A673 (cell line): ENCODE measurements at regions of chr4 and their contacts with region 1.

Region 1: DNA sequence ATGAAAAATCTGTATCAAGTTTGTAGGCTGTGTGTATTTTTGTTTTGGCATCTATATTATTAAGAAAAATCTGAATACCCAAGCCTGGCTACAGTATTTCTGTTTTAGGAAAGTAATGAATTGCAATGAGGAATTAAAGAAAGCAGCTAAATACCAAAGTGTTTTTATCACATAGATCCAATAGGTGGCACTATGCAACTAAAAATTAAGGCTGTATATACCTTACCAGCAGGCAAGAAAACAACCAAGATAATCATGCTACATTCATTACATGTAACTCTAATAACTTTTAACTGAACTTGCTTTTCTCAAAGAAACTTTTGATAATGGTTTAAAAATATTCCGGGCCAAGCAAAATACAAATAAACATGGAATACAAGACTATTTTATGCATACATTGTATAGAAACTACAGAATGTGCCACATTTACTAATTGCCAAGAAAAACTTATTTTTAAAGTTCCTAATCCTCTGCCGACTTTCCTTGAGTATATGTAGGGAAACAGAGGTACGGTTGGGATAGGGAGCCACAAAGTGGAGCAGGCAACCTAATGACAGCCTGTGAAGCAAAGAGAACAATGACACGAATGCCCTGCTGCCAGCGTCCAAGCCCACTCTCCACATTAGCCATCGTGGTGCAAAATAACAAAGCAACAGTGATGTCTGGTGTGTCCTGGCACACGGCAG is 63.7 kb downstream of the SEC24D start:
- DNase-seq: peak; percentile 68
- H3K4me3 ChIP-seq: no peak overlapping the region
- H3K27ac ChIP-seq: no peak overlapping the region
- H3K4me1 ChIP-seq: no peaks in the 10 kb centered on the region
- H3K27me3 ChIP-seq: no peaks in the 10 kb centered on the region
- CTCF ChIP-seq: peak; percentile 72

Region 2: GRCh38 chr4:118865091-118865708 is 93.0 kb after region 1 on chr4:
- CTCF ChIA-PET with region 1: no interaction called
- POLR2A ChIA-PET with region 1: no interaction called
- intact Hi-C with region 1: loop called (anchors 5 kb)
- DNase-seq: peak; percentile 68
- H3K4me3 ChIP-seq: no peak overlapping the region
- H3K27ac ChIP-seq: no peak overlapping the region
- H3K4me1 ChIP-seq: no peaks in the 10 kb centered on the region
- H3K27me3 ChIP-seq: no peaks in the 10 kb centered on the region
- CTCF ChIP-seq: peak; percentile 82

Region 3: GRCh38 chr4:118888666-118889311 is 116.6 kb after region 1 on chr4 and contains the start of gene SYNPO2:
- CTCF ChIA-PET with region 1: interaction called, 4 read pairs
- POLR2A ChIA-PET with region 1: no interaction called
- intact Hi-C with region 1: loop called (anchors 1 kb)
- DNase-seq: peak; percentile 81
- H3K4me3 ChIP-seq: peak within 1 kb of the TSS; percentile 40
- H3K27ac ChIP-seq: no peak within 1 kb of the TSS
- H3K4me1 ChIP-seq: peaks cover 11% of the 10 kb centered on the region
- H3K27me3 ChIP-seq: no peaks in the 10 kb centered on the region
- CTCF ChIP-seq: no peak
- total RNA-seq, gene SYNPO2: 0.20 and 0.26 TPM in 2 replicates

Region 4: DNA sequence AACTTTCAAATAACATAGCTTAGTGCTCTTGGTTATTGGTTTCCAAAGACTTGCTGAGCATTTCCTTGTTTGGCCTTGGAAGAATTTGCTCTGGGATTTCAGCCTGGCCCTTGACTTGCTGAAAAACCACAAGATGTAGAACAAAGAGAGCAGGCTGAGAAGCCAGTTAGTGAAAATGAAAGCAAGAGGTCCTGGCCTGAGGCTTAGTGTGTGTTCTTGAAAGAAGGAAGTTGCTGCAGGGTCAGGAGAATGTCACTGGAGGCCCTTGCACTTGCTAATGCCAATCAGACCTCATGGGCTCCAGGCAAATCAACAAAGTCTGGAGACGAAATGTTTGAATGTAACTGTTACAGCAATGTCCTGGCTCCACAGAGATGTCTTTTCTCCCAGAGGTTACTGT is 195.8 kb after region 1 on chr4:
- CTCF ChIA-PET with region 1: no interaction called
- POLR2A ChIA-PET with region 1: no interaction called
- intact Hi-C with region 1: loop called (anchors 1 kb)
- DNase-seq: no peak
- H3K4me3 ChIP-seq: no peak overlapping the region
- H3K27ac ChIP-seq: no peak overlapping the region
- H3K4me1 ChIP-seq: no peaks in the 10 kb centered on the region
- H3K27me3 ChIP-seq: no peaks in the 10 kb centered on the region
- CTCF ChIP-seq: no peak

Region 5: DNA sequence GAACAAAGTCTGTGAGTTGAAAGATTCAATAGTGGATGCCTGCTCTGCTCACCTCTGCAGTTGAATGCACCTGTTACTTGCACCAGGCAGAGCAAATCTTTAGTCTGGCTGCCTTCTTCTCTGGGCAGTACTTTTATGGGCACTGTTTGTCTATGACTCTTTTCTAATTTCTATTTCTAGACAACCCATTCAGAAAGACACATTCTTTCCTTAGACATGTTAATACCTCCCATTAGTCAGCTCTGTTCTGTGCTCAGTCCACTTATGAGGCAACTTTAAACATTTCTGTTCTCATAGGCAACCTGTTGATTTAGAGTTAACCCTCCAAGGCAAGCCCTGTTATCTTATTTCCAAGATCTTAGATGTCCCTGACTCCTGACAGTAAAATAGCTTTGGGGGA is 225.4 kb after region 1 on chr4:
- CTCF ChIA-PET with region 1: no interaction called
- POLR2A ChIA-PET with region 1: no interaction called
- intact Hi-C with region 1: no loop called
- DNase-seq: no peak
- H3K4me3 ChIP-seq: no peak overlapping the region
- H3K27ac ChIP-seq: no peak overlapping the region
- H3K4me1 ChIP-seq: no peaks in the 10 kb centered on the region
- H3K27me3 ChIP-seq: no peaks in the 10 kb centered on the region
- CTCF ChIP-seq: no peak

Region 6: GRCh38 chr4:119286377-119287002 is 514.3 kb after region 1 on chr4:
- CTCF ChIA-PET with region 1: no interaction called
- POLR2A ChIA-PET with region 1: no interaction called
- intact Hi-C with region 1: loop called (anchors 10 kb)
- DNase-seq: peak; percentile 73
- H3K4me3 ChIP-seq: no peak overlapping the region
- H3K27ac ChIP-seq: no peak overlapping the region
- H3K4me1 ChIP-seq: peaks cover 12% of the 10 kb centered on the region
- H3K27me3 ChIP-seq: no peaks in the 10 kb centered on the region
- CTCF ChIP-seq: peak; percentile 73

Region 7: GRCh38 chr4:119506806-119507205 is 734.6 kb after region 1 on chr4:
- CTCF ChIA-PET with region 1: no interaction called
- POLR2A ChIA-PET with region 1: interaction called, 17 read pairs
- intact Hi-C with region 1: no loop called
- DNase-seq: no peak
- H3K4me3 ChIP-seq: no peak overlapping the region
- H3K27ac ChIP-seq: no peak overlapping the region
- H3K4me1 ChIP-seq: no peaks in the 10 kb centered on the region
- H3K27me3 ChIP-seq: no peaks in the 10 kb centered on the region
- CTCF ChIP-seq: no peak